ENCODE measurements at regions of chr4 and their contacts with region 1.

Region 1: GRCh38 chr4:24519649-24520048 is 64.7 kb downstream of the DHX15 start:
- DNase-seq: no peak
- H3K4me3 ChIP-seq: no peak overlapping the region
- H3K4me3 Mint-ChIP-seq: no peak overlapping the region
- H3K27ac ChIP-seq: no peak overlapping the region
- H3K27ac Mint-ChIP-seq: no peak overlapping the region
- H3K4me1 ChIP-seq: no peaks in the 10 kb centered on the region
- H3K4me1 Mint-ChIP-seq: peaks cover 8 to 17% (median 12%) of the 10 kb centered on the region in 4 donors
- H3K27me3 ChIP-seq: no peaks in the 10 kb centered on the region
- H3K27me3 Mint-ChIP-seq: no peaks in the 10 kb centered on the region

Region 2: GRCh38 chr4:23768541-23768940 is 751.1 kb before region 1 on chr4:
- CTCF ChIA-PET with region 1: no interaction called
- POLR2A ChIA-PET with region 1: no interaction called
- intact Hi-C with region 1: no loop called
- DNase-seq: no peak
- H3K4me3 ChIP-seq: no peak overlapping the region
- H3K4me3 Mint-ChIP-seq: no peak overlapping the region
- H3K27ac ChIP-seq: no peak overlapping the region
- H3K27ac Mint-ChIP-seq: no peak overlapping the region
- H3K4me1 ChIP-seq: no peaks in the 10 kb centered on the region
- H3K4me1 Mint-ChIP-seq: no peaks in the 10 kb centered on the region
- H3K27me3 ChIP-seq: no peaks in the 10 kb centered on the region
- H3K27me3 Mint-ChIP-seq: no peaks in the 10 kb centered on the region

Region 3: GRCh38 chr4:24544208-24544988 is 24.7 kb after region 1 on chr4:
- CTCF ChIA-PET with region 1: no interaction called
- POLR2A ChIA-PET with region 1: interaction called, 7 read pairs
- intact Hi-C with region 1: loop called (anchors 2 kb)
- DNase-seq: no peak
- H3K4me3 ChIP-seq: no peak overlapping the region
- H3K4me3 Mint-ChIP-seq: peak overlapping the region in 2 of 8 donors; percentile 4 to 8
- H3K27ac ChIP-seq: no peak overlapping the region
- H3K27ac Mint-ChIP-seq: peak overlapping the region in 3 of 7 donors; percentile 48 to 69 (median 53)
- H3K4me1 ChIP-seq: peaks cover 37% of the 10 kb centered on the region
- H3K4me1 Mint-ChIP-seq: peaks cover 27 to 44% (median 34%) of the 10 kb centered on the region in 4 donors
- H3K27me3 ChIP-seq: no peaks in the 10 kb centered on the region
- H3K27me3 Mint-ChIP-seq: no peaks in the 10 kb centered on the region

Measured in CD4-positive, alpha-beta memory T cell (primary cell).